ENCODE measurements at regions of chr7 and their contacts with region 1.

Region 1: DNA sequence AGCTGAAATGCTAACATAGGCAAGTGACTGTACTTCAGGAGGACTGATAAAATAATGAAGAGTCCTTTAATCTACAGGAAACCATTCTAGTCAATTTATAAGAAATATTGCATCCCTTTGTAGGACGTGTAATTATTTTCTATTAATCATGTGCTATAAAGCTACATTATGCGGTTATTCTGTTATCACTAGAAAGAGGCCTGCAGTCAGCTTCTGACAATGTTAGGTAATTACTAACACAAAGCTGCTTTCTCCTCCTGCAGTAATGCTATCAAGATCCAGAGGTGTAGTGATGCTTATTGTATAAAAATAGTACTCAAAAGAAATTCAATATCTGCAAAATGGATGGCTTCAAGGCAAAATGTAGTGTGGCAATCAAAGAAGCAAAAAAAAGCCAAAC is 191.1 kb downstream of the SKAP2 start:
- DNase-seq: no peak
- H3K4me3 ChIP-seq: no peak overlapping the region
- H3K4me3 Mint-ChIP-seq: no peak overlapping the region
- H3K27ac ChIP-seq: no peak overlapping the region
- H3K27ac Mint-ChIP-seq: no peak overlapping the region
- H3K4me1 ChIP-seq: no peaks in the 10 kb centered on the region
- H3K4me1 Mint-ChIP-seq: no peaks in the 10 kb centered on the region
- H3K27me3 ChIP-seq: no peaks in the 10 kb centered on the region
- H3K27me3 Mint-ChIP-seq: peaks cover 4% of the 10 kb centered on the region in 2 donors

Region 2: DNA sequence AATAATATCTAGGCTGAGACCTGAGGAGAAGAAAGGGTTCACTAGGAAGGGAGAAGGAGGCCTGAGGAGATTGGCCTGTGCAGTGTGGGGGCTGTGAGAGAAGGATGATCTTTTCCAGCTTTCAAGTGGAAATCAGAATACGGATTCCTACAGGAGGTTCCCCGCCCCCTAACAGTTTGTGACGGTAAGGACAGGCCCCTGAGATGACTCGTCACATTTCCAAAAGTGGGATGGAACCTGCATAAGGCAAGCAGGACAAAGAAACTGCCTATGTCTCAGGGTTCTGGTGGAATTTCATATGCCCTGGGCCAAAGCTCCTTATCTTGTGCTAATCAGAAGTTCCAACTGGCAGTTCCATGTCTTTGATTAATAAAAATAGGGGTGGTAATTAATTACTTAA is 106.0 kb before region 1 on chr7:
- CTCF ChIA-PET with region 1: no interaction called
- POLR2A ChIA-PET with region 1: no interaction called
- intact Hi-C with region 1: no loop called
- DNase-seq: no peak
- H3K4me3 ChIP-seq: no peak overlapping the region
- H3K4me3 Mint-ChIP-seq: no peak overlapping the region
- H3K27ac ChIP-seq: no peak overlapping the region
- H3K27ac Mint-ChIP-seq: no peak overlapping the region
- H3K4me1 ChIP-seq: no peaks in the 10 kb centered on the region
- H3K4me1 Mint-ChIP-seq: no peaks in the 10 kb centered on the region
- H3K27me3 ChIP-seq: no peaks in the 10 kb centered on the region
- H3K27me3 Mint-ChIP-seq: peaks cover 16 to 27% of the 10 kb centered on the region in 2 donors

Region 3: GRCh38 chr7:26636808-26637207 is 36.5 kb before region 1 on chr7:
- CTCF ChIA-PET with region 1: no interaction called
- POLR2A ChIA-PET with region 1: no interaction called
- intact Hi-C with region 1: no loop called
- DNase-seq: no peak
- H3K4me3 ChIP-seq: no peak overlapping the region
- H3K4me3 Mint-ChIP-seq: no peak overlapping the region
- H3K27ac ChIP-seq: no peak overlapping the region
- H3K27ac Mint-ChIP-seq: no peak overlapping the region
- H3K4me1 ChIP-seq: no peaks in the 10 kb centered on the region
- H3K4me1 Mint-ChIP-seq: peaks cover 0 to 7% (median 5%) of the 10 kb centered on the region in 4 donors
- H3K27me3 ChIP-seq: no peaks in the 10 kb centered on the region
- H3K27me3 Mint-ChIP-seq: peaks cover 6 to 14% of the 10 kb centered on the region in 2 donors

Region 4: DNA sequence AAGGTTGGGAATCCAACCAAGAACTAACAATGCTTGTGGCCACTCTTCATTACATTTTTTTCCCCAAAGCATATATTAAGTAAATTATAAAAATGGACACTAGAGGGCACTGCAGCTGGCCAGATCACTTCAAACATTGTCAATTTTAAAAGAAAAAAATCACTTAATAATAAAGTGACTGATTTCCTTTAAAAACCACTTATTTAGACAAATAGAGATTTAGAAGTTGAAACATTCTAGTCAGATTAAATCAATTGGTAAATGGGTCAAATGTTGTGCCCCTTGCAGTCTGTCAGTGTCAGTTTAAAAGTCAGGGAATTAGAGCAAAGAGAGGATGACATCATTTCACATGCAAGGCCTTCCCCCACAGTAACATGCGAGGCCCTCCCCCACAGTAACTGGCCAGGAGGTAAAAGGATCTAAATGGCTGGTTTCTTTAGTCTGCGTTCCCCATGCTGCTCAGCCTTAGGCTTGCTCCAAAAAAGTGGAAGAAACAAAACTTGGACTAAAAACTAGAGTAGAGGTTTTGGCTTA is 13.2 kb after region 1 on chr7:
- CTCF ChIA-PET with region 1: interaction called, 24 read pairs
- POLR2A ChIA-PET with region 1: no interaction called
- intact Hi-C with region 1: no loop called
- DNase-seq: peak in 4 of 5 donors; percentile 28 to 43 (median 34)
- H3K4me3 ChIP-seq: no peak overlapping the region
- H3K4me3 Mint-ChIP-seq: no peak overlapping the region
- H3K27ac ChIP-seq: no peak overlapping the region
- H3K27ac Mint-ChIP-seq: no peak overlapping the region
- H3K4me1 ChIP-seq: no peaks in the 10 kb centered on the region
- H3K4me1 Mint-ChIP-seq: peaks cover 0 to under 1% (median 0%) of the 10 kb centered on the region in 4 donors
- H3K27me3 ChIP-seq: no peaks in the 10 kb centered on the region
- H3K27me3 Mint-ChIP-seq: peaks cover 10 to 11% of the 10 kb centered on the region in 2 donors

Region 5: GRCh38 chr7:26841003-26841739 is 167.9 kb after region 1 on chr7:
- CTCF ChIA-PET with region 1: no interaction called
- POLR2A ChIA-PET with region 1: no interaction called
- intact Hi-C with region 1: no loop called
- DNase-seq: no peak
- H3K4me3 ChIP-seq: no peak overlapping the region
- H3K4me3 Mint-ChIP-seq: no peak overlapping the region
- H3K27ac ChIP-seq: no peak overlapping the region
- H3K27ac Mint-ChIP-seq: no peak overlapping the region
- H3K4me1 ChIP-seq: no peaks in the 10 kb centered on the region
- H3K4me1 Mint-ChIP-seq: no peaks in the 10 kb centered on the region
- H3K27me3 ChIP-seq: no peaks in the 10 kb centered on the region
- H3K27me3 Mint-ChIP-seq: no peaks in the 10 kb centered on the region

Measured in CD4-positive, alpha-beta memory T cell (primary cell).